T-cell (primary cell): ENCODE measurements at regions of chr13 and their contacts with region 1.

Region 1: DNA sequence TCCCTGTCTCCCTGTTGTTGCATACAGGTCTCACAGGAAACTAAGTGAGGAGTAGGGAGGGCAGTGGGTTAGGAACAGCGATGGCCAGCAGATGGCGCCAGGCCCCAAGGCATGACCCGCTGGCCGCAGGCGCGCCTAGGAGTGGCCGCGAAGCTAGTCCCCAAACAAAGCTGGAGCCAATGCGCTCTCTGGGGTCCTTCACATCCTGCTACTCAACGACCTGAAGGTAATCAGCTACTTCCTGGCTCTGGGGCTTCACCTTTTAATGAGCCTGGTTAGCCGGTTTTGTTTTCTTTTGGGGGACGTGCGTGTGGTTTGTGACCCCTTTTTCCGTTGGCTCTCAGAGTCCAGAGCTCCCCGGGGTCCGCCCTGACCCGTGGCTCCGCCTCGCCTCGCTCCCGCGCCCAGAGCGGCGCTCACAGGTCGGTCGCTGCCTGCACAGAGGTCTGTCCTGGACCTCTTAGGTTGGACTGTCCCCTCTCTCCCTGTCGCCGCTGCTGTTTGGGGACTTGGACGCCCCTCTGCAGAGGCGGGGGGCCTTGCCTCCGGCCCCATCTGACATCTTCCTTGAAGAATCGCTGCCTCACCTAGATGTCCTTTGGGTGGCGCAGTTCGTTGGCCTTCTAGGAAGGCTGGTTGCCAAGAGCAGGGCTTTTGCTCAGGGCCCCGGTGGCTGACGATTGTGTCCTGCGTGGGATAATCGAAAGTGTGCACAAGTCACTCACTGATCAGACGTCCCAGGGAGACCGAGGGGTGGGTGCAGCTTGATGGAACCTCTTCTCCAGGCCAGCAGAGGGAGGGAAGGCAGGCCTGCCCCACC is 62.1 kb upstream of the GTF3A start:
- DNase-seq: peak; percentile 37 to 86 (median 66)
- ATAC-seq: peak; percentile 91 to 95 (median 94)
- H3K4me3 ChIP-seq: peak overlapping the region; percentile 29 to 35
- H3K4me3 Mint-ChIP-seq: peak overlapping the region; percentile 17 to 49 (median 41)
- H3K27ac ChIP-seq: no peak overlapping the region
- H3K27ac Mint-ChIP-seq: no peak overlapping the region
- H3K4me1 ChIP-seq: peaks cover 0 to 13% of the 10 kb centered on the region in 2 experiments
- H3K4me1 Mint-ChIP-seq: peaks cover 0 to 5% (median 4%) of the 10 kb centered on the region in 3 donors
- H3K27me3 ChIP-seq: peaks cover 0 to 48% of the 10 kb centered on the region in 2 experiments
- H3K27me3 Mint-ChIP-seq: peaks cover 24 to 51% of the 10 kb centered on the region in 2 donors

Region 2: DNA sequence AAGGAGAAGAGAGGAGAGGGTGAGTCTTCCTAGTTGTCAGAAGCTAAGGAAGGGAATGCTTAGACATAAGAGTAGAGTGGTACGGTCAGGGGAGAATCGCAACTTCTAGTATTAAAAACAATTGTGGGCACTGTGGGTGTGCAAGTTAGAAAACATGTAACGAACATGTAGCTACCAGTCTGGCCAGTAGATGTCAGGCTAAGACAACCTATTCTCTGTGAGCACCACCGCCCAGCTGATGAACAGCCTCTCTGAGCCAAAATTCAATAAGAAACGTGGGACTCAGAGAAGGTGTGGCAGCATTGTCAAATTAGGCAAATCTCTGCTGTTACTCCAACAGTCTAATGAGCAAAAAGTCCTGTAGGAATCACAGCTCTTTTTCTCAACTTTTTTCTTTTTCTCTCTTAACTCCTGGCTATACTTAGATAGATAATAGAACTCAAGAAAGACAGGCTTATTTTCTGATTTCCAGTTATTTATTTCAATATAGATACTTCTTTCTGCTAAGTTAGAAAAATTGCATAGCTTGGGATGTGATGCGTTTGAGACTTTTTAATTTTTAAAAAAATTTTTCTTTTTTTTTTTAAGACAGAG is 376.9 kb before region 1 on chr13:
- CTCF ChIA-PET with region 1: interaction called, 44 to 48 read pairs
- POLR2A ChIA-PET with region 1: interaction called, 3 read pairs
- DNase-seq: peak; percentile 22 to 86 (median 59)
- ATAC-seq: peak; percentile 83 to 86 (median 84)
- H3K4me3 ChIP-seq: no peak overlapping the region
- H3K4me3 Mint-ChIP-seq: no peak overlapping the region
- H3K27ac ChIP-seq: no peak overlapping the region
- H3K27ac Mint-ChIP-seq: no peak overlapping the region
- H3K4me1 ChIP-seq: no peaks in the 10 kb centered on the region
- H3K4me1 Mint-ChIP-seq: no peaks in the 10 kb centered on the region
- H3K27me3 ChIP-seq: peaks cover 0 to 20% of the 10 kb centered on the region in 2 experiments
- H3K27me3 Mint-ChIP-seq: peaks cover 3 to 23% of the 10 kb centered on the region in 2 donors

Region 3: GRCh38 chr13:27283906-27284493 is 78.3 kb before region 1 on chr13:
- CTCF ChIA-PET with region 1: interaction called in 1 of 2 experiments, 10 read pairs
- POLR2A ChIA-PET with region 1: no interaction called
- DNase-seq: peak in 1 of 35 experiments; percentile 20
- ATAC-seq: no peak
- H3K4me3 ChIP-seq: no peak overlapping the region
- H3K4me3 Mint-ChIP-seq: no peak overlapping the region
- H3K27ac ChIP-seq: no peak overlapping the region
- H3K27ac Mint-ChIP-seq: no peak overlapping the region
- H3K4me1 ChIP-seq: no peaks in the 10 kb centered on the region
- H3K4me1 Mint-ChIP-seq: no peaks in the 10 kb centered on the region
- H3K27me3 ChIP-seq: peaks cover 0 to 8% of the 10 kb centered on the region in 2 experiments
- H3K27me3 Mint-ChIP-seq: peaks cover 0 to 3% of the 10 kb centered on the region in 2 donors

Region 4: DNA sequence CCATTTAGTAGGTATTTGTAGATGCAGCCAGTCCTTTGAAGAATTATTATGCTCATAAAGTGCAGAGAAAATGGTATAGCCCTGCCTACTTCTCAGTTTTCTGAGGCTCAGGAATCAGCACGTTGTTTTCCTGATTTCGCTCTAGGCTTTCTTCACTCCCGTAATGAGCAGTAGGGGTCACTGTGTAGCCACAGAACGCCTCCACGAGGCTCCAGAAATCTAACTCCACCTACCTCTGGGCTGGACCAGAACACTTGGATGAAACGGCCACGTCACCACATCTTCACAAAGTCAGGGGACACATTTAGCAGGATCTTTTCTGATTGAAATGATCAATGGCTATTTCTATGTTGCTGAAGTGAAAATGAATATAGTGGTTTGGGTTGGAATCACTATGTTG is 12.4 kb after region 1 on chr13:
- CTCF ChIA-PET with region 1: interaction called, 4 to 10 read pairs
- POLR2A ChIA-PET with region 1: no interaction called
- DNase-seq: peak in 33 of 35 experiments; percentile 8 to 75 (median 35)
- ATAC-seq: peak; percentile 79 to 89 (median 82)
- H3K4me3 ChIP-seq: no peak overlapping the region
- H3K4me3 Mint-ChIP-seq: no peak overlapping the region
- H3K27ac ChIP-seq: no peak overlapping the region
- H3K27ac Mint-ChIP-seq: no peak overlapping the region
- H3K4me1 ChIP-seq: peaks cover 0 to 5% of the 10 kb centered on the region in 2 experiments
- H3K4me1 Mint-ChIP-seq: peaks cover 2 to 11% (median 9%) of the 10 kb centered on the region in 3 donors
- H3K27me3 ChIP-seq: peaks cover 11 to 21% of the 10 kb centered on the region in 2 experiments
- H3K27me3 Mint-ChIP-seq: peaks cover 22% of the 10 kb centered on the region in 2 donors

Region 5: GRCh38 chr13:27980280-27980998 is 618.2 kb after region 1 on chr13:
- CTCF ChIA-PET with region 1: interaction called, 14 to 27 read pairs
- POLR2A ChIA-PET with region 1: no interaction called
- DNase-seq: no peak
- ATAC-seq: no peak
- H3K4me3 ChIP-seq: no peak overlapping the region
- H3K4me3 Mint-ChIP-seq: peak overlapping the region in 1 of 3 donors; percentile 25
- H3K27ac ChIP-seq: no peak overlapping the region
- H3K27ac Mint-ChIP-seq: no peak overlapping the region
- H3K4me1 ChIP-seq: peaks cover 0 to 24% of the 10 kb centered on the region in 2 experiments
- H3K4me1 Mint-ChIP-seq: peaks cover 13 to 30% (median 27%) of the 10 kb centered on the region in 3 donors
- H3K27me3 ChIP-seq: peaks cover 33 to 72% of the 10 kb centered on the region in 2 experiments
- H3K27me3 Mint-ChIP-seq: peaks cover 67 to 76% of the 10 kb centered on the region in 2 donors

Region 6: GRCh38 chr13:28697441-28697840 is 1335.2 kb after region 1 on chr13:
- CTCF ChIA-PET with region 1: no interaction called
- POLR2A ChIA-PET with region 1: interaction called in 1 of 2 experiments, 16 read pairs
- DNase-seq: no peak
- ATAC-seq: no peak
- H3K4me3 ChIP-seq: no peak overlapping the region
- H3K4me3 Mint-ChIP-seq: peak overlapping the region in 1 of 3 donors; percentile 17
- H3K27ac ChIP-seq: no peak overlapping the region
- H3K27ac Mint-ChIP-seq: no peak overlapping the region
- H3K4me1 ChIP-seq: no peaks in the 10 kb centered on the region
- H3K4me1 Mint-ChIP-seq: no peaks in the 10 kb centered on the region
- H3K27me3 ChIP-seq: no peaks in the 10 kb centered on the region
- H3K27me3 Mint-ChIP-seq: no peaks in the 10 kb centered on the region